ENCODE measurements at regions of chrX and their contacts with region 1.

Region 1: GRCh38 chrX:41728125-41728524 is 4.1 kb downstream of the GPR82 start:
- DNase-seq: no peak
- H3K4me3 ChIP-seq: no peak overlapping the region
- H3K27ac ChIP-seq: no peak overlapping the region
- H3K4me1 ChIP-seq: no peaks in the 10 kb centered on the region
- H3K27me3 ChIP-seq: no peaks in the 10 kb centered on the region
- CTCF ChIP-seq: no peak

Region 2: GRCh38 chrX:41384041-41384705 is 344.0 kb before region 1 on chrX:
- intact Hi-C with region 1: no loop called
- DNase-seq: peak; percentile 68
- H3K4me3 ChIP-seq: no peak overlapping the region
- H3K27ac ChIP-seq: no peak overlapping the region
- H3K4me1 ChIP-seq: no peaks in the 10 kb centered on the region
- H3K27me3 ChIP-seq: no peaks in the 10 kb centered on the region
- CTCF ChIP-seq: no peak

Region 3: GRCh38 chrX:41526925-41527324 is 201.2 kb before region 1 on chrX:
- intact Hi-C with region 1: no loop called
- DNase-seq: no peak
- H3K4me3 ChIP-seq: no peak overlapping the region
- H3K27ac ChIP-seq: no peak overlapping the region
- H3K4me1 ChIP-seq: peaks cover 10% of the 10 kb centered on the region
- H3K27me3 ChIP-seq: no peaks in the 10 kb centered on the region
- CTCF ChIP-seq: no peak

Region 4: GRCh38 chrX:41664307-41665299 is 63.5 kb before region 1 on chrX:
- intact Hi-C with region 1: loop called (anchors 5 kb)
- DNase-seq: no peak
- H3K4me3 ChIP-seq: no peak overlapping the region
- H3K27ac ChIP-seq: no peak overlapping the region
- H3K4me1 ChIP-seq: peaks cover 16% of the 10 kb centered on the region
- H3K27me3 ChIP-seq: no peaks in the 10 kb centered on the region
- CTCF ChIP-seq: no peak

Region 5: GRCh38 chrX:41946989-41947612 is 219.0 kb after region 1 on chrX:
- intact Hi-C with region 1: no loop called
- DNase-seq: no peak
- H3K4me3 ChIP-seq: no peak overlapping the region
- H3K27ac ChIP-seq: no peak overlapping the region
- H3K4me1 ChIP-seq: no peaks in the 10 kb centered on the region
- H3K27me3 ChIP-seq: no peaks in the 10 kb centered on the region
- CTCF ChIP-seq: no peak

Measured in left ventricle myocardium inferior (tissue), 1 donor.